ENCODE measurements at regions of chr17 and their contacts with region 1.

Region 1: GRCh38 chr17:4626734-4627256 is 14.7 kb downstream of the ALOX15 start:
- DNase-seq: no peak
- ATAC-seq: no peak
- H3K4me3 ChIP-seq: no peak overlapping the region
- H3K4me3 Mint-ChIP-seq: no peak overlapping the region
- H3K27ac ChIP-seq: no peak overlapping the region
- H3K27ac Mint-ChIP-seq: no peak overlapping the region
- H3K4me1 ChIP-seq: peaks cover 4% of the 10 kb centered on the region
- H3K4me1 Mint-ChIP-seq: no peaks in the 10 kb centered on the region
- H3K27me3 ChIP-seq: no peaks in the 10 kb centered on the region
- H3K27me3 Mint-ChIP-seq: peaks cover 17 to 19% of the 10 kb centered on the region in 2 donors
- CTCF ChIP-seq: no peak

Region 2: GRCh38 chr17:4381690-4382671 is 244.8 kb before region 1 on chr17:
- intact Hi-C with region 1: no loop called
- DNase-seq: peak in 1 of 2 donors; percentile 20
- ATAC-seq: no peak
- H3K4me3 ChIP-seq: no peak overlapping the region
- H3K4me3 Mint-ChIP-seq: no peak overlapping the region
- H3K27ac ChIP-seq: no peak overlapping the region
- H3K27ac Mint-ChIP-seq: peak overlapping the region in 1 of 2 donors; percentile 35
- H3K4me1 ChIP-seq: peaks cover 6% of the 10 kb centered on the region
- H3K4me1 Mint-ChIP-seq: peaks cover 0 to 9% of the 10 kb centered on the region in 2 donors
- H3K27me3 ChIP-seq: no peaks in the 10 kb centered on the region
- H3K27me3 Mint-ChIP-seq: no peaks in the 10 kb centered on the region
- CTCF ChIP-seq: no peak

Region 3: GRCh38 chr17:4420692-4421131 is 206.1 kb before region 1 on chr17:
- intact Hi-C with region 1: loop called (anchors 1 kb)
- DNase-seq: peak; percentile 28 to 89
- ATAC-seq: peak; percentile 90 to 98 (median 98)
- H3K4me3 ChIP-seq: no peak overlapping the region
- H3K4me3 Mint-ChIP-seq: no peak overlapping the region
- H3K27ac ChIP-seq: no peak overlapping the region
- H3K27ac Mint-ChIP-seq: no peak overlapping the region
- H3K4me1 ChIP-seq: peaks cover 5% of the 10 kb centered on the region
- H3K4me1 Mint-ChIP-seq: no peaks in the 10 kb centered on the region
- H3K27me3 ChIP-seq: no peaks in the 10 kb centered on the region
- H3K27me3 Mint-ChIP-seq: peaks cover 0 to 4% of the 10 kb centered on the region in 2 donors
- CTCF ChIP-seq: peak; percentile 83

Region 4: DNA sequence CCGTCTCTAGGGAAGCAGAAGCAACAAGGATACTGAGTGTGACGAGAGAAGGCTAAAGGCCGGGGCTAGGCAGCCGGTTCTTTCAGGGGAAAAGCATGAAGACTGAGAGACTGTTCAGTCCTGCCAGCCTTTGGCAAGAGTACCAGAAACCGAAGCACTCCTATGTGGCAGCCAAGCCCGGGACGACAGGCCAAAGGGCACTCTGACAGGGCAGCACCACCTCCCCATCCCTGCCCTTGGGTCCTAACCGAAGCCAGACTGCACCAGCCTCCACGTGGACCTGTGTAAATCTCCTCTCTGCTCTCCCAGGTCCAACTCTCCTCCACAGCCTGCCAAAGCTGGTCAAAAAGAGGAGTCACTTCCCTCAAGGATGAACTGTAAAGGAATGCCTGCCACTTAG is 38.2 kb after region 1 on chr17:
- intact Hi-C with region 1: no loop called
- DNase-seq: no peak
- ATAC-seq: no peak
- H3K4me3 ChIP-seq: no peak overlapping the region
- H3K4me3 Mint-ChIP-seq: no peak overlapping the region
- H3K27ac ChIP-seq: no peak overlapping the region
- H3K27ac Mint-ChIP-seq: no peak overlapping the region
- H3K4me1 ChIP-seq: no peaks in the 10 kb centered on the region
- H3K4me1 Mint-ChIP-seq: no peaks in the 10 kb centered on the region
- H3K27me3 ChIP-seq: no peaks in the 10 kb centered on the region
- H3K27me3 Mint-ChIP-seq: peaks cover under 1 to 9% of the 10 kb centered on the region in 2 donors
- CTCF ChIP-seq: no peak

Region 5: GRCh38 chr17:4849011-4849536 is 222.3 kb after region 1 on chr17:
- intact Hi-C with region 1: no loop called
- DNase-seq: no peak
- ATAC-seq: no peak
- H3K4me3 ChIP-seq: no peak overlapping the region
- H3K4me3 Mint-ChIP-seq: no peak overlapping the region
- H3K27ac ChIP-seq: no peak overlapping the region
- H3K27ac Mint-ChIP-seq: no peak overlapping the region
- H3K4me1 ChIP-seq: peaks cover 27% of the 10 kb centered on the region
- H3K4me1 Mint-ChIP-seq: peaks cover 38 to 53% of the 10 kb centered on the region in 2 donors
- H3K27me3 ChIP-seq: no peaks in the 10 kb centered on the region
- H3K27me3 Mint-ChIP-seq: peaks cover 0 to 2% of the 10 kb centered on the region in 2 donors
- CTCF ChIP-seq: no peak